ENCODE measurements at regions of chr2 and their contacts with region 1.

Region 1: DNA sequence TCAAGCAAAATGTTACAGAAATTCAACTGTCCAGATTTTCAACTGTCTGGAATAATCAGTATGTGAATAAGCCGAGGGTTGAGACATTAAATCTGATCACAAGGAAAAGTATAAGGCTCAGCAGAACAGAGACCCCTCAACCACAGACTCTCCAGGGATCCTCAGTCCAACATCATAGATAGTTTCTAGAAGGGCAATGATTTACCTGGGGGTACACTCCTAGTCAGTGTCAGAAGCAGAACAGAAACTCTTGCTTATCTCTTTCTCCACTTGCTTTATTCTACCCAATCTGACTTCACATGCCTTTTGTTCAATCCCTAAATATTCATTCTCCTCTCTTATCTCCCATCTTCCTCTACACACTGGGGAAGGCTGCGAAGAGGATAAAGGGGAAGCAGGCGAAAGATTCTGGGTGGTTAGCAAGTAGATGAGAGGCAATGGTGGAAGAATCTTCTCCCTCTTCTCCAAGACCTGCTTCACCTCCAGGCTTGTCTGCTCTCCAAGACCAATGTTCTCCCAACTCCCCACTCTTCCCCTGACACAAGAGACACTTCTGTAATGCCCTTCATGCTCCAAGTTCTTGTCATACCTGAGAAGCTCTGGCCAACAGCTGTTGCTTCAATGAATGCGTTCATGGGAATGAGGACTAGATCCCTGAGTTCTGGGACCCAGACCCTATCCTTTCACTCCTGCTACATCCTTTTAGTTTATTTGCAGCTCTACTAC is 36.6 kb downstream of the ICOS start:
- DNase-seq: no peak
- H3K4me3 Mint-ChIP-seq: no peak overlapping the region
- H3K27ac Mint-ChIP-seq: no peak overlapping the region
- H3K4me1 Mint-ChIP-seq: peaks cover 17% of the 10 kb centered on the region
- H3K27me3 Mint-ChIP-seq: no peaks in the 10 kb centered on the region

Region 2: DNA sequence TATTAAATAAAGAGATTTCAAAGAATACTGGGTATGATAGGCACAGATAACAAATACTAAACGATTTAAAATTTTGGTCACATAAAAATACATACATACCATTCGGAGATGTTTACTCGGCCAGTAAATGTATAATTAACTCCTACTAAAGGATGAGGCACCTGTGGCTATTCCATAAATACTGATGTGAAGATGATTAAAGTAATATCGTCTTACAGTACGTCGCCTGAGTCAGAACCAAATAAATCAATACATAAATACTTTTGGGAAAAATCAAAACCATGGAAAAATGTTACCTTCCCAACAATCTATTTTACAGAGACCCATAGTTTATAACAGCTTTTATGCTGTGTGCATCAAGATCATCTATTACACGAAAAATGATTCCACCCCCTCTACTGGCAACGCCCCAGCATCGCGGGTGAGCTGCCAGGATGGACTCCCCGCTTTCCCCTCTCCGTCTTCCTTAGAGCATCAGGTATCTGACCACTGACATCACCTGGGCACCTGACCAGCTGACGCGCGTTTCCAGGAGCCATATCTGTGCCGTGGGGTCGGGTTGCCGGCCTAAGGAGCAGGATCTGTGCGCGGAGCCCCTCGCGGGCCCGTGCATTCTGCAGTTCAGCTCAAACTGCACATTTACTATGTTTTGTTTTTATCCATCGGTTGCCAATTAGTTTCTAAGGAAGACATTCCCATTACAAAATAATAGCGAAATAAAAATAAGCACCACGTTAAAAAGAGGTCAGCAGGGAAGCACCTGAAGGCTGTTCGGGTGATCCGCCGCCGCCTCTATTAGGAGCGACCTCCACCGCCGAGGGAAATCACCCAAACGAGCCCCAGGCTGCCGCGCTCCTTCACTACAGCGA is 1102.5 kb before region 1 on chr2:
- CTCF ChIA-PET with region 1: no interaction called
- intact Hi-C with region 1: no loop called
- DNase-seq: peak; percentile 85
- H3K4me3 Mint-ChIP-seq: peak overlapping the region; percentile 88
- H3K27ac Mint-ChIP-seq: peak overlapping the region; percentile 72
- H3K4me1 Mint-ChIP-seq: peaks cover 7% of the 10 kb centered on the region
- H3K27me3 Mint-ChIP-seq: no peaks in the 10 kb centered on the region

Region 3: GRCh38 chr2:203949228-203949627 is 23.9 kb before region 1 on chr2:
- CTCF ChIA-PET with region 1: no interaction called
- intact Hi-C with region 1: no loop called
- DNase-seq: no peak
- H3K4me3 Mint-ChIP-seq: peak overlapping the region; percentile 42
- H3K27ac Mint-ChIP-seq: peak overlapping the region; percentile 70
- H3K4me1 Mint-ChIP-seq: peaks cover 87% of the 10 kb centered on the region
- H3K27me3 Mint-ChIP-seq: no peaks in the 10 kb centered on the region

Region 4: DNA sequence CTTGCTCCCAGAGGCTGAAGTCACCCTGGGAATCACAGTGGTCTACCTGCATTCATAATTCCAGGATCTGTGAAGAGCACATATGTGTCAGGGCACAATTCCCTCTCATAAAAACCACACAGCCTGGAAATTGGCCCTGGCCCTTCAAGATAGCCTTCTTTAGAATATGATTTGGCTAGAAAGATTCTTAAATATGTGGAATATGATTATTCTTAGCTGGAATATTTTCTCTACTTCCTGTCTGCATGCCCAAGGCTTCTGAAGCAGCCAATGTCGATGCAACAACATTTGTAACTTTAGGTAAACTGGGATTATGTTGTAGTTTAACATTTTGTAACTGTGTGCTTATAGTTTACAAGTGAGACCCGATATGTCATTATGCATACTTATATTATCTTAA is 12.4 kb before region 1 on chr2:
- CTCF ChIA-PET with region 1: interaction called, 10 read pairs
- intact Hi-C with region 1: no loop called
- DNase-seq: no peak
- H3K4me3 Mint-ChIP-seq: no peak overlapping the region
- H3K27ac Mint-ChIP-seq: no peak overlapping the region
- H3K4me1 Mint-ChIP-seq: peaks cover 39% of the 10 kb centered on the region
- H3K27me3 Mint-ChIP-seq: no peaks in the 10 kb centered on the region

Region 5: GRCh38 chr2:203989521-203989920 is 16.4 kb after region 1 on chr2:
- CTCF ChIA-PET with region 1: interaction called, 5 read pairs
- intact Hi-C with region 1: loop called (anchors 1 kb)
- DNase-seq: no peak
- H3K4me3 Mint-ChIP-seq: no peak overlapping the region
- H3K27ac Mint-ChIP-seq: peak overlapping the region; percentile 80
- H3K4me1 Mint-ChIP-seq: peaks cover 14% of the 10 kb centered on the region
- H3K27me3 Mint-ChIP-seq: no peaks in the 10 kb centered on the region

Region 6: DNA sequence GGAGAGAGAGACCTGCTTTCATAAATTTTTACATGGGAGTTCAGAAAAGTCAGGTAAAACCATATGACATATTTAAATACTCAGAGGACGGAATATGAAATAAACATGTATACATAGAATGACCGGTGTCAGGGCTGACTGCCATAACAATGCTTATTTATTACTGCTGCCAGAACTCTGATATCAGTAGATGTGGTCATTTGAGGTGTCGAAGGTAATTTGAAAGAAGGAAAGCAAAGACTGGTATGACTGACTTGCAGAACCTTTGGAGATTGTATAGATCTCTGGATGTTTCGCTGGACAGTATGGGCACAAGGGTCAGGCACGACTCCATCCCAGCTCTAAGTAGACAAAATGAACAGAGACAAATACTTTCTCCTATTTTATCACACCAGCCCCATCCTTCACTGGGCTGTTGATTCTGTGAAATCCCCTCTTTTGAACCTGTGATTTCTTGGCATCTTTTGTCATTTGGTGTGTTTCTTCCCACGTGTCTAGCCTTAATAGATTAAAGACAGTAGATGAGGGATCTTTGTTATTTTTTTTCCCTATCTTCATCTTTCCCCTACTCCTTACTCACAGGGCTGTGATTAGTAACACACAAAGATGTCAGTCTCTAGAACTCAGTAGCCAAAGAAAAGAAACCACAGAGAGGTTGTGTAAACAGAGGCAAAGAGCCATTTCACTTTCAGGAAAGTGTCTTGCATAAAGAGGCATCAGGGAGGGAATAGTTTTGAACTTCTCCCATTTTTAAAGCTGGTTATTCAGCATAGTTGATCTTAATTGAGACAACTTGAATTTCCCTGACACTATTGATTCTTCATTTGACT is 25.0 kb after region 1 on chr2:
- CTCF ChIA-PET with region 1: interaction called, 3 read pairs
- intact Hi-C with region 1: loop called (anchors 1 kb)
- DNase-seq: no peak
- H3K4me3 Mint-ChIP-seq: peak overlapping the region; percentile 4
- H3K27ac Mint-ChIP-seq: peak overlapping the region; percentile 77
- H3K4me1 Mint-ChIP-seq: peaks cover 68% of the 10 kb centered on the region
- H3K27me3 Mint-ChIP-seq: no peaks in the 10 kb centered on the region

Region 7: DNA sequence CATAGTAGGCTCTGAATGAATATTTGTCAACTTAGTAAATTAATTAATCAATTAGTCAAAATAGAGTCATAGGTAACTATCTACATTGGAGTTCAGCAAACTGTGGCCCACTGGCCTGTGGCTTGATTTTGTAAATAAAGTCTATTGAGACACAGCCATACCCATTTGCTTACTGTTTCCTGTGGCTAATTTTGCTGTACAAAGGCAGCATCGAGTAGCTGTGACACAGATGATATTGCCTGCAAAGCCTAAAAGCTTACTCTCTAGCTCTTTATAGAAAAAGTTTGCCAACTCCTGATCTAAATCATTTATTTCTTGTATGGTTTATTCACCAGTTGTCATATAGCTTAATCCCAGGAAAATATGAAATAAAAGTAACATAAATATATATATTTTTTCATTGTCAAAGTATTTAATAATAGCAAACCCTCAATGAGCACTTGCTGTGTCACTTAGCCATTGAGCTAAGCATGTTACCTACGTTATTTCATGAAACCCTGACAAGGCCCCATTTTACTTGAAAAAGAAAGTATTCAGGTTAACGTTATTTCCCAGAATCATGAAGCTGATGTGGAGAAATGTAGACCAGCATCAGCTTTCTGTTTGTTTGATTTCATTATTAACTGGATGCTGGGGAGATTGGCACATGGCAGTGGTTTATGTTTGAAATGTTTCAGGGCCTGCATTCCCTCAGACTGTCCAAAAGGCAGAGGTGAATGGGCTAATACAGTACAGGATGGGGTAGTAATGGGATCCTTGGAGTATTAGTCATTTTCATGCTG is 33.0 kb after region 1 on chr2:
- CTCF ChIA-PET with region 1: no interaction called
- intact Hi-C with region 1: loop called (anchors 1 kb)
- DNase-seq: peak; percentile 40
- H3K4me3 Mint-ChIP-seq: no peak overlapping the region
- H3K27ac Mint-ChIP-seq: peak overlapping the region; percentile 96
- H3K4me1 Mint-ChIP-seq: peaks cover 95% of the 10 kb centered on the region
- H3K27me3 Mint-ChIP-seq: no peaks in the 10 kb centered on the region

Measured in activated naive CD4-positive, alpha-beta T cell treated with anti-CD3 and anti-CD28 coated beads for 36 hours (primary cell).